Left colon (tissue), 2 donors: ENCODE measurements at regions of chrX and their contacts with region 1.

Region 1: GRCh38 chrX:47384502-47384901 is 14.1 kb downstream of the ZNF157 start:
- DNase-seq: peak; percentile 35 to 75
- ATAC-seq: peak; percentile 83

Region 2: DNA sequence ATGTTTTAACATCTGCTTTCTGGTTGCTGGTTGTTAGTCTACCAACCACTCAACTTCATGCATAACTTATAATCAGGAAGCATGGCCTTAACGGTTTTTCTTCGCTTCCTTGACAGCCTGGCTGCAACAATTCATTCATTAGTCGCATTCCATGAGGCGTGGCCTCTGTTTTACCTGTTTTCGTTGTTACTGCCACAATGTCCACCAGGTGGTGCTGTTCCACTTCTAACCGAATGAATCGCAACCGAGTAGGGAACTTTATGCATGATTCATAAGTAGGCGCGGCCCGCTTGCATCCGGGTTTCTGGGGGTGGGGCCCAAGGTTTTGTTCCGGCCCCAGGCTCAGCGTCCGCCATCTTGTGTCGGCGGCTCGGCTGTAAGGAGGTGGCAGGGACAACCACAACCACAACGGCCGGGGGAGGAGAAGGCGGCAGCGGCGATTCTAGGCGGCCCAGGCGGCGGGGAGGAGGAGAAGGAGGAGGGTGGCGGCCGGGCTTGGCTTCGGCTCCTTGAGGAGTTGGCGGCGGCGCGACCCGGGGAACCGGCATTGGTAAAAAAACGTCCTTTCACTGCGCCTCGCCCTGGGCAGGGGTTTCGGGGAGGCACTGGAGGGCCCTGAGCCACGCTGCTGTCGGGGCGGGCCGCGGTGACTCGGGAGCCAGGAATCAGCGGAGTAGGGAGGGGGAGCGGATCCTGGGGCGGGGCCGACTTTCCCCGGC is 190.9 kb before region 1 on chrX and contains the start of gene UBA1:
- intact Hi-C with region 1: loop called in 1 of 2 experiments (anchors 5 kb)
- DNase-seq: peak; percentile 96 to 98
- ATAC-seq: peak; percentile 89
- total RNA-seq, gene UBA1: 217 to 220 TPM

Region 3: DNA sequence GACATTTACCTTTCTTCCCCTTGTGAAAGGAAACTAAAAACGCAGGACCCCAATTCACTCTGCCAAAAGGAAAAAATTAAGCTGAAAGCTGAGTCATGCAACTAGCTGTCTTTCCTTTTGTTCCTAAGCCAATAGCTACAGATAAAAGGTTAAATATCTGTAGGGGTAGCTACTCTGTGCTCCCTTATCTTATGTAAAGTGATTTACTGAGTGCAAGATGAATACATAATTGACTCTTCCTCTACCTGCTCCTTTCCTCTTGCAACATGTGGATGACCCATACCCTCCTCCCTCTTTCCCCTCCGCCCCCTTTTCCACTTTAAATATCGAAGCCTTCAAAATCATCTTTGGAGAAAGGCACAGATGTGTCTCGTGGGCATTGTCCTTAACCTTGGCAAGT is 82.1 kb before region 1 on chrX:
- intact Hi-C with region 1: no loop called
- DNase-seq: no peak
- ATAC-seq: no peak

Region 4: GRCh38 chrX:47523297-47523696 is 138.8 kb after region 1 on chrX:
- intact Hi-C with region 1: loop called in 1 of 2 experiments (anchors 10 kb)
- DNase-seq: peak; percentile 69 to 87
- ATAC-seq: peak; percentile 98